Left ventricle myocardium inferior (tissue), 1 donor: ENCODE measurements at regions of chr6 and their contacts with region 1.

Region 1: DNA sequence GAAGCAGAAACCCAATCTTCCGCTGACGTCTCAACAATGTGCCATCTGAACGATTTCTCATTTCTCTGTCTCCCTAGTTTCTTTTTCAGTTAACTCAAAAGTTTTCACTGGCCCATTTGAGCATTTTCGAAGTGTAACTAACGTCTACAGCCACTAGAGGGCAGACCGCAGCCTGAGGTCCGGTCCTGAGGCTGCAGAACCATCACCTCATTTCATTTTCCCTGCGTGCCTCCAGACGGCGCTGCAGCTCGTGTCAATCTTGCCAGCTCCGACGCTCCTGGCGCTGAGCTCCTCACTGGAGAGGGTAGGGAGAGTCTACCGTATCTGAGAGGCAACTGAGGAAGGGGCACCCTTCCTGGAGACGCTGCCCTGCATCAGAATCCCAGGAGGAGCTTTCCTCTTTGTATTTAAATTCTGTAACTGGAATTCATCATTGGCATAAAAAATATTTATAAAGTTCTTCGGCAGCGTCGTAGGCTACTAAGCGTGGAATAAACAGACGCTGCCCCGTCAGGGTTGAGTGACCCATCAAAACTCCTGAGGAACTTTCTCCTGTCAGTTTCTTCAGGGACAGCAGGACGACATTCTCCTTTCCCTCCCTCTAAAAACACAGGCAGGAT is 28.5 kb upstream of the DTNBP1 start:
- DNase-seq: peak; percentile 78
- H3K4me3 ChIP-seq: peak overlapping the region; percentile 42
- H3K27ac ChIP-seq: no peak overlapping the region
- H3K4me1 ChIP-seq: peaks cover 14% of the 10 kb centered on the region
- H3K27me3 ChIP-seq: no peaks in the 10 kb centered on the region
- CTCF ChIP-seq: peak; percentile 99

Region 2: GRCh38 chr6:16183187-16183664 is 491.9 kb after region 1 on chr6:
- intact Hi-C with region 1: loop called (anchors 5 kb)
- DNase-seq: no peak
- H3K4me3 ChIP-seq: no peak overlapping the region
- H3K27ac ChIP-seq: no peak overlapping the region
- H3K4me1 ChIP-seq: no peaks in the 10 kb centered on the region
- H3K27me3 ChIP-seq: no peaks in the 10 kb centered on the region
- CTCF ChIP-seq: peak; percentile 82